Activated CD4-positive, alpha-beta memory T cell treated with anti-CD3 and anti-CD28 coated beads, Interleukin-2, amount 10 ng/mL, durations not matched to agents 7 days and 5 days (primary cell): ENCODE measurements at regions of chr2 and their contacts with region 1.

Region 1: GRCh38 chr2:44479122-44479887 is 117.6 kb downstream of the CAMKMT start:
- DNase-seq: peak; percentile 32
- H3K4me3 Mint-ChIP-seq: no peak overlapping the region
- H3K27ac Mint-ChIP-seq: no peak overlapping the region
- H3K4me1 Mint-ChIP-seq: peaks cover 3% of the 10 kb centered on the region
- H3K27me3 Mint-ChIP-seq: no peaks in the 10 kb centered on the region

Region 2: DNA sequence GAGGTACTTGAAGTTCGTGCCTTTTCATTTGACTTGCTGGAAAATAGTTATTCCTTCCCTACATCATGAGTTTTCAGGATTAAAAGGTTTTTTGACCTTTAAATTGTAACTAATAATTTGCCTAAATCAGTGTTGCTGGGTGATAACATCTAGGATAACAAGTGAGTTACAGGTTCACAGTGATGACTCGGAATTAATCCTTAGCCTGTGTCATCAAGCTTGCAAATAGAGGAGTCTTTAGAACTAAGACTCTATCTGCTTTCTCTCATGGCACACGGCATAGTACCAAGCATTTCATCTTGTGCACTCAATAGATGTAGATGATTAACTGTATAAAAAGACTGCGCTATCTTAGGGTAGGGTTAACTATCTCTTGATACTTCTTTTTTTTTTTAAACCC is 38.1 kb before region 1 on chr2:
- CTCF ChIA-PET with region 1: no interaction called
- POLR2A ChIA-PET with region 1: no interaction called
- DNase-seq: no peak
- H3K4me3 Mint-ChIP-seq: no peak overlapping the region
- H3K27ac Mint-ChIP-seq: no peak overlapping the region
- H3K4me1 Mint-ChIP-seq: no peaks in the 10 kb centered on the region
- H3K27me3 Mint-ChIP-seq: no peaks in the 10 kb centered on the region

Region 3: DNA sequence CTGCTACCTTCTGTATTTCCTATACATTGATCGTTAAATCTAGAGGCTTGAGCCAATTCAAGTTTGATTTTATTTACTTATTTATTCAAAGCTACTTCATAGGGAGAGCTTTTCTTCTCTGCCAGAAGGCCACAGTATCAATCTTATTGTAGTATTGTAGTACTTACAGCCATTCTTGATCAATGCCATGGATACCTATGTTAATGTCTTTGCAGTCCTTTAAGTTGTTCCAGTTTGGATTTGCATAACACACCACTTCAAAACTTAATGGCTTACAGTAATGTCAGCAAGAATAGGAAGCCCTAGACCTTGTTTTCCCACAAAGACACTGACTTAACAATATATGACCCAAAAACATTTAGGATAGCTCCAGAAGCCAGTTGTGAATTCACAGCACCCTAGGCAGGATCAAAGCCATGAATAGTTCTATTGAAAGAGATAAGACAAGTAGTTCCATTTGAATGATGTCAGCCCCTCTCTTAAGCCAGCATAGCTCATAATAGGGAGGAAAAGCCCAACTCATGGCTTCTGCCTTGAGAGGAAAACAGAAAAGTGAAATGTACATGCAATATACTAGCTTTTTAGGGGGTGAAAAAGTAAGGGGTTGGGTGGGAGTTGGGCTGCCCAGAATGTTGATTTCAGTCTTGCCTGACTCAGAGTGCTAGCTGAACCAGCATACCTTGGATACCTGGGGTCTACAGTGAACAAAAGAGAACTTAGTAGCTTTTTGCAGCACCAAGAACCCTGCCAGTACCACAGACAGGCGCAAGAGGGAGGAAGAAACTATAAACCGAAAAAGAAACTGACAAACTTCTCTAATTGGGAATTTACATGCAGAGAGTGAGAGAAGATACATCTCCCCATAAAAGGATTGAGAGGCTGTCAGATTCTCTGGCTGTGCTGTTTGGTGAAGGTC is 16.1 kb before region 1 on chr2:
- CTCF ChIA-PET with region 1: interaction called, 23 read pairs
- POLR2A ChIA-PET with region 1: no interaction called
- DNase-seq: no peak
- H3K4me3 Mint-ChIP-seq: no peak overlapping the region
- H3K27ac Mint-ChIP-seq: no peak overlapping the region
- H3K4me1 Mint-ChIP-seq: no peaks in the 10 kb centered on the region
- H3K27me3 Mint-ChIP-seq: no peaks in the 10 kb centered on the region

Region 4: GRCh38 chr2:44490726-44491125 is 11.4 kb after region 1 on chr2:
- CTCF ChIA-PET with region 1: interaction called, 19 read pairs
- POLR2A ChIA-PET with region 1: no interaction called
- DNase-seq: no peak
- H3K4me3 Mint-ChIP-seq: no peak overlapping the region
- H3K27ac Mint-ChIP-seq: no peak overlapping the region
- H3K4me1 Mint-ChIP-seq: no peaks in the 10 kb centered on the region
- H3K27me3 Mint-ChIP-seq: no peaks in the 10 kb centered on the region

Region 5: DNA sequence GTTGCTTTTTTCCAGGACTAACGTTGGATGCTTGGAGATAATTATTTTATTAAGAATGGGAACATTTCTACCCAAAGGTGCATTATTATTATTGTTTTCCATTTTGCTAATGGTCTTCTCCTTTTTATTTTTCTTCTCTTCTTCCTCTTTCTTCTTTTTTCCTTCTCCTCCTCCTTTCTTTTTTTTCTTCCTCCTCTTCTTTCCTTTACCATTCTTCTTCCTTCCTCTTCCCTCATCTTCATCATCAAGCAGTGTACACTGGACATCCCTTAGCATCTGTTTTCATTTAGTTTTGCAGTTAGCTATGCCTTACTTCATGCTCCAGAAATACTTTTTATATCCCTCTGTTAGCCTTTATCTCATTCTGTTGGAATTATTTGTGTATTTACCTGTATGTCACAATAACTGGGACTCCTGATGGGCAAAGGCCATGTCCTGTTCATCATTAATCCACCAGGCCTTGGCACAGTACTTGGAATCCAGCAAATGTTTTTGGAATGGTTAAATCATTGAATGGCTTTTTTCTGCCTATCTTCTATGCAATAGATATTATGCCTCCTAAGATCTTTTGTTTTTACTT is 45.1 kb after region 1 on chr2:
- CTCF ChIA-PET with region 1: no interaction called
- POLR2A ChIA-PET with region 1: no interaction called
- DNase-seq: no peak
- H3K4me3 Mint-ChIP-seq: no peak overlapping the region
- H3K27ac Mint-ChIP-seq: no peak overlapping the region
- H3K4me1 Mint-ChIP-seq: no peaks in the 10 kb centered on the region
- H3K27me3 Mint-ChIP-seq: no peaks in the 10 kb centered on the region

Region 6: GRCh38 chr2:44578421-44579135 is 99.3 kb after region 1 on chr2:
- CTCF ChIA-PET with region 1: no interaction called
- POLR2A ChIA-PET with region 1: no interaction called
- DNase-seq: no peak
- H3K4me3 Mint-ChIP-seq: peak overlapping the region; percentile 3
- H3K27ac Mint-ChIP-seq: no peak overlapping the region
- H3K4me1 Mint-ChIP-seq: peaks cover 16% of the 10 kb centered on the region
- H3K27me3 Mint-ChIP-seq: no peaks in the 10 kb centered on the region

Region 7: DNA sequence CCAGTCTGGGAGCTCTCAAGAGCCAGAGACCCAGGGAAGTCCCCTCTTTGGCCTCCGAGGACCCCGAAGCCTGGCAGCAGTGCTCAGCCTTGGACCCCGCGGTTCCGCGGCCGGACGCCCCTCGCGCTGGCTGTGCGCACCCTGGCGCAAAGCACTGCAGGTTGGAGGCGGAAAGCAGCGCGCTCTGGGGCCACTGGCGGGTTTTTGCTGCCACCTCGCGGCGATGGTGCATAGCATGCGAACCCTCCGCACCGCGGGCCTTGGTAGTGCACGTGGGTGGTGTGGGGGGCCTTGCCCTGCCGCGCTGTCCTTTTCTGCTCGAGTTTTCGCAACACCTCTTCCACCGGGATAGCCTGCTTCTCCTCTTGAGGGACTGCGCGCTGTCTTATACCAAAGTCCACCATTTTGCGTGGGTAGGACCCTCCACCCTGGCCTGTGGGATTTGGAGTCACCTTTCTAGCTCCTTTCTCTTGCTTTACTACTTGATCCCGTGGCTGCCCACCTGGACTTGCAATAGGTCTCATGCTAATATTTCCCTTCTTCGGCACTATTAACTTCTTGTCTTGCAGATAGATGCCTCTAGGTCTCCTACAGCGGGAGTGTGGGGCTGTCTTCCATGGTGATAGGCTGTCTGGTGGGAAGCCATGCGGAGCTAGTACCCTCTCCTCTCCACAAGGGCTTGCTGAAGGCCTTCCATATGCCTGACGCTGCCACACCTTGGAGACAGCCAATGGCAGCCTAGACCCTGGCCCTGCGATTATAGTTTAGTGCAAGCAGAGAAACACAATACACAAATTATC is 476.5 kb after region 1 on chr2:
- CTCF ChIA-PET with region 1: interaction called, 64 read pairs
- POLR2A ChIA-PET with region 1: interaction called, 3 read pairs
- DNase-seq: peak; percentile 73
- H3K4me3 Mint-ChIP-seq: no peak overlapping the region
- H3K27ac Mint-ChIP-seq: no peak overlapping the region
- H3K4me1 Mint-ChIP-seq: peaks cover 21% of the 10 kb centered on the region
- H3K27me3 Mint-ChIP-seq: peaks cover 68% of the 10 kb centered on the region